ENCODE measurements at regions of chr2 and their contacts with region 1.

Region 1: GRCh38 chr2:88669371-88670214 is 21.9 kb upstream of the RPIA start:
- DNase-seq: no peak
- H3K4me3 ChIP-seq: no peak overlapping the region
- H3K27ac ChIP-seq: no peak overlapping the region
- H3K27me3 ChIP-seq: peaks cover 9% of the 10 kb centered on the region
- CTCF ChIP-seq: peak; percentile 74

Region 2: GRCh38 chr2:88265349-88266303 is 404.0 kb before region 1 on chr2:
- CTCF ChIA-PET with region 1: no interaction called
- POLR2A ChIA-PET with region 1: no interaction called
- DNase-seq: no peak
- H3K4me3 ChIP-seq: no peak overlapping the region
- H3K27ac ChIP-seq: no peak overlapping the region
- H3K27me3 ChIP-seq: no peaks in the 10 kb centered on the region
- CTCF ChIP-seq: no peak

Region 3: GRCh38 chr2:88574445-88574844 is 95.1 kb before region 1 on chr2:
- CTCF ChIA-PET with region 1: interaction called, 28 read pairs
- POLR2A ChIA-PET with region 1: no interaction called
- DNase-seq: no peak
- H3K4me3 ChIP-seq: no peak overlapping the region
- H3K27ac ChIP-seq: no peak overlapping the region
- H3K27me3 ChIP-seq: no peaks in the 10 kb centered on the region
- CTCF ChIP-seq: no peak

Region 4: GRCh38 chr2:88590998-88591613 is 78.5 kb before region 1 on chr2:
- CTCF ChIA-PET with region 1: interaction called, 294 read pairs
- POLR2A ChIA-PET with region 1: interaction called, 3 read pairs
- DNase-seq: peak; percentile 37
- H3K4me3 ChIP-seq: no peak overlapping the region
- H3K27ac ChIP-seq: no peak overlapping the region
- H3K27me3 ChIP-seq: no peaks in the 10 kb centered on the region
- CTCF ChIP-seq: peak; percentile 85

Region 5: GRCh38 chr2:88613921-88614320 is 55.7 kb before region 1 on chr2:
- CTCF ChIA-PET with region 1: interaction called, 15 read pairs
- POLR2A ChIA-PET with region 1: no interaction called
- DNase-seq: no peak
- H3K4me3 ChIP-seq: no peak overlapping the region
- H3K27ac ChIP-seq: no peak overlapping the region
- H3K27me3 ChIP-seq: no peaks in the 10 kb centered on the region
- CTCF ChIP-seq: no peak

Region 6: GRCh38 chr2:88659538-88659916 is 10.1 kb before region 1 on chr2:
- CTCF ChIA-PET with region 1: interaction called, 89 read pairs
- POLR2A ChIA-PET with region 1: no interaction called
- DNase-seq: no peak
- H3K4me3 ChIP-seq: no peak overlapping the region
- H3K27ac ChIP-seq: peak overlapping the region; percentile 40
- H3K27me3 ChIP-seq: no peaks in the 10 kb centered on the region
- CTCF ChIP-seq: no peak

Region 7: DNA sequence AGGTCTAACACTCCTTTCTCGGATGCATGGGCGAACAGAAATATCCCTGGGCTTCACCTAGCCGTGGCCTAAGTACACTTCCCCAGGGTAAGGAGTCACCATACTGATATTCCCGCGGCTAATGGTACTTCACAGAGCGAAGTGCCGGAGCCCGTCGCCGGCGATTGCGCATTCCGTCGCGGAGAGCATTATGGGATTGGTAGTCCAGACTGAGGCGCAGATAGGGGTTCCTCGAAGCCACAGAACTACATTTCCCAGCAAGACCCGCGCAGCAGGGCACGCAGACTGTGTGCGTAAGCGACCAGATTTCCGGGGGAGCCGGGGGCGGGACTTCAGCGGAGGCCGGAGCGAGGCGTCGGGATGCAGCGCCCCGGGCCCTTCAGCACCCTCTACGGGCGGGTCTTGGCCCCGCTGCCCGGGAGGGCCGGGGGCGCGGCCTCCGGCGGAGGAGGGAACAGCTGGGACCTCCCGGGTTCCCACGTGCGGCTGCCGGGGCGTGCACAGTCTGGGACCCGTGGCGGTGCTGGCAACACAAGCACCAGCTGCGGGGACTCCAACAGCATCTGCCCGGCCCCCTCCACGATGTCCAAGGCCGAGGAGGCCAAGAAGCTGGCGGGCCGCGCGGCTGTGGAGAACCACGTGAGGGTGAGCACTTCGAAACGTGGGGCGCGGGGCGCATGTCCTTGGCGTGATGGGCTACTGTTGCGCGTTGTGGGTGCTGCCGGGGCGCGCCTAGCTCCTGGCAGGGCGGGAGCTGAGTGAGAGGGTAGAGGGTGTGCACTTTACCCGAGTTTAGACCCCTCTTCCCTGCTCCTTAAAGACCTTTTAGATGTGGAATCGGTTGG is 22.0 kb after region 1 on chr2 and contains the start of gene RPIA:
- CTCF ChIA-PET with region 1: interaction called, 33 read pairs
- POLR2A ChIA-PET with region 1: no interaction called
- DNase-seq: peak; percentile 96
- H3K4me3 ChIP-seq: peak within 1 kb of the TSS; percentile 97
- H3K27ac ChIP-seq: peak within 1 kb of the TSS; percentile 80
- H3K27me3 ChIP-seq: no peaks in the 10 kb centered on the region
- CTCF ChIP-seq: peak; percentile 65
- polyA plus RNA-seq, gene RPIA: 9.4 and 10.9 TPM in 2 replicates